Naive thymus-derived CD8-positive, alpha-beta T cell (primary cell): ENCODE measurements at regions of chr2 and their contacts with region 1.

Region 1: DNA sequence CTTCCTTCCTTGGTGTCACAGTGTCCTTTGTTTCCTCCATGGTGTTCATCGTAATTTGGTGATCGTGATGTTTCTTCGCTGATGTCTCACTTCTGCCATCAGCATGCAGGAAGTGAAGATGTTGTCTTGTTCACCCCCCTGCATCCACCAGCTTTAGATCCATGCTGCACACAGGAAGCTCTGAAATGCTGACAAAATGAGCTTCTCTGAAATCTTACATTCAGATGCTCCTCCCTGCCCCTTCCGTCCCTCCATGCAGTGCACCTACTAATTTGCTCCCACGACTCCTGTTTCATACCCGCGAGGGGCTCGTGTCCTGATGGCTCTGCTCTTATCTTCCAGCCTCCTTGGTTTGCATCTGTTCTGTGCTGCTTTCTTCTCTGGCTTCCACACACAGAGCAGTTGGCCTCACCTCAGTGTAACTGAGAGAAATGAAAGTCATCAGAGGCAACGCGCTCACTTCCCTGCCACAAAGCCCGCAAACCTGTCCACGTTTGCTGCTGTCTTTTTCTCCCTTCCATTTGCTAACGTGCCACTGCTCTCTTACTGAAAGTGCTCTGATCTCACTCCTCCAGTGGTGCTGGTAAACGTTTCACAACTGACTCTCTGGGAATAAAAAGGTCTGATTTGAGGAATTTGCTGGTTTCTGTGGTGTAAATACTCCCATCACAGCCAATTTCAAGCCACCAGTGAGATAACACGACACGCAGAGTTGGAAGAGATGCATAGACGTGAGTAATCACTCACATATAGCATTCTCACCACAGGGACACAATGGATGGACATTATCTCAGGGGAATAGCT is 41.0 kb upstream of the MGAT4A start:
- DNase-seq: peak; percentile 32 to 91 (median 78)
- ATAC-seq: peak; percentile 68 to 78
- H3K4me3 Mint-ChIP-seq: peak overlapping the region; percentile 82 to 96 (median 93)
- H3K27ac Mint-ChIP-seq: peak overlapping the region; percentile 96 to 100 (median 98)
- H3K4me1 Mint-ChIP-seq: peaks cover 48 to 86% (median 74%) of the 10 kb centered on the region in 4 donors
- H3K27me3 Mint-ChIP-seq: no peaks in the 10 kb centered on the region

Region 2: DNA sequence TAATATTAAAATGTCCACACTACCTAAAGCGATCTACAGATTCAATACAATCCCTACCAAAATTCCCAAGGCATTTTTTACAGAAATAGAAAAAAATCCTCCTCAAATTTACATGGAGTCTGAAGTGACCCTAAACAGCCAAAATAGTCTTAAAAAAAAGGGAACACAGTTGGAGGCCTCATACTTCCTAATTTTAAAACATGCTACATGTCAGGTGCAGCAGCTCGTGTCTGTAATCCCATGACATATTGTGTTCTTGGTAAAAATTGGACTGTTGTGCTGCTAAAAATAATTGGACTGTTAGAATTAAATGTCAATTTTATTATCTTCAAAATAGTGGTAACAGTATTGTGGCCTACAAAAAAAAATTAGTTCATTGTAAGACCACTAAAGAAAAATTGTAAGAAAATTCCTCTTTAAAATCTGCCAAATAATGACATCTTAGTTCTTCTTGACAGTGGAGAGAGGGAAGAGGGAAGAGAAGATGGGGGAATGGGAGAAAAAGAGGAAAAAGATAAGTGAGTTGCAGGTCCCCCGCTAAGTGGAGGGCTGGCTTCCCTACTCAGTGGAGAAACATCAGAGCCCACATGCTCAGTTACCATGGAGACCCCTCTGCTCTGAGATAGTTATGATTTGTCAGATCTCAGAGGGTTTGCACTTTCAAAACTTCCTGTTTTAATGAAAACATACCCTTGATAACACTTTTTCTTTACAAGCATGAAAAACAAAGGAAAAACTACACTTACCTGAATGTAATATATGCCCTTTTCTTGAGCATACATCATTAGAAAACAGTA is 117.0 kb before region 1 on chr2:
- POLR2A ChIA-PET with region 1: interaction called, 31 read pairs
- DNase-seq: peak; percentile 28 to 87 (median 68)
- ATAC-seq: peak; percentile 73
- H3K4me3 Mint-ChIP-seq: peak overlapping the region; percentile 40 to 86 (median 66)
- H3K27ac Mint-ChIP-seq: peak overlapping the region; percentile 94 to 99 (median 97)
- H3K4me1 Mint-ChIP-seq: peaks cover 34 to 87% (median 82%) of the 10 kb centered on the region in 4 donors
- H3K27me3 Mint-ChIP-seq: no peaks in the 10 kb centered on the region

Region 3: DNA sequence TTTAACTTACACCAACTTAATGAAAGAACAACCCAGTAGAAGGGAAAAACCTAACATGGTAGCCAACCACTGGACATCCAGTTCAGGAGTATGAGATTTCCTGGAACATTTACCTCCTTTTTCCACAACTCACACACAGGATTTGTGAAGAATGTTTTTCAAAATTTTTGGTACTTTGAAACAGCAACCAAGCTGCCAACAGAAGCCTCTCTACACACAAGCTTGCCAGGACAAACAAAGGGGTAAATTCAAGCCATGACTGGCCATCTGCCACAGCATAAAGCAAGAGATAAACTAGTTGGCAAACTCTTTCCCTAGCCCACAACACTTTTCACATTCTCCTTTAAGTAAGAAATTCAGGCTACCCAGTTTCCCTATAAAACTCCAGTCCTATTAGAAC is 62.4 kb before region 1 on chr2:
- POLR2A ChIA-PET with region 1: interaction called, 17 read pairs
- DNase-seq: no peak
- ATAC-seq: no peak
- H3K4me3 Mint-ChIP-seq: peak overlapping the region; percentile 57 to 82 (median 74)
- H3K27ac Mint-ChIP-seq: peak overlapping the region; percentile 70 to 95 (median 87)
- H3K4me1 Mint-ChIP-seq: peaks cover 55 to 88% (median 86%) of the 10 kb centered on the region in 4 donors
- H3K27me3 Mint-ChIP-seq: no peaks in the 10 kb centered on the region

Region 4: DNA sequence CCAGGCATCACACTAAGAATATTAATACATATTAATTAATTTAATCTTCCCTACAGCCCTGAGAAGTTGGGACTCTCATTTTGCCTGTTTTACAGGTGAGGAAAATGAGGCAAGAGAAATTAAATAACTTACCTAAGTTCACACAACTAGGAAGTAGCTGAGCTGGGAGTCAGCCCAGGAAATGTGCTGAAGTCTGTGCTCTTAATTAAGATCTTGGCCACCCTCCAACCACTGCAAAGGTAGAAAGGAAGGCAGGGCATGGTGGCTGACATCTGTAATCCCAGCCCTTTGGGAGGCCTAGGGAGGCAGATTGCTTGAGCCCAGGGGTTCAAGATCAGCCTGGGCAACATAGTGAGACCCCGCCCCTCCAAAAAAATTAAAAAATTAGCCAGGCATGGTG is 28.1 kb before region 1 on chr2:
- POLR2A ChIA-PET with region 1: interaction called, 15 read pairs
- DNase-seq: peak in 1 of 10 donors; percentile 25
- ATAC-seq: peak; percentile 61 to 65
- H3K4me3 Mint-ChIP-seq: peak overlapping the region in 5 of 10 donors; percentile 18 to 61 (median 48)
- H3K27ac Mint-ChIP-seq: peak overlapping the region in 6 of 10 donors; percentile 52 to 86 (median 64)
- H3K4me1 Mint-ChIP-seq: peaks cover 24 to 67% (median 56%) of the 10 kb centered on the region in 4 donors
- H3K27me3 Mint-ChIP-seq: no peaks in the 10 kb centered on the region

Region 5: GRCh38 chr2:98787700-98788099 is 15.8 kb after region 1 on chr2:
- POLR2A ChIA-PET with region 1: interaction called, 12 read pairs
- DNase-seq: no peak
- ATAC-seq: no peak
- H3K4me3 Mint-ChIP-seq: no peak overlapping the region
- H3K27ac Mint-ChIP-seq: peak overlapping the region in 2 of 10 donors; percentile 16 to 33
- H3K4me1 Mint-ChIP-seq: peaks cover 0 to 1% (median 0%) of the 10 kb centered on the region in 4 donors
- H3K27me3 Mint-ChIP-seq: no peaks in the 10 kb centered on the region